MCF 10A (cell line): ENCODE measurements at regions of chr3 and their contacts with region 1.

Region 1: GRCh38 chr3:159732172-159733111 is 256.2 kb upstream of the IL12A start:
- DNase-seq: peak; percentile 73
- H3K4me3 Mint-ChIP-seq: peak overlapping the region; percentile 81
- H3K27ac Mint-ChIP-seq: peak overlapping the region; percentile 50
- H3K4me1 Mint-ChIP-seq: peaks cover 19% of the 10 kb centered on the region
- H3K27me3 Mint-ChIP-seq: no peaks in the 10 kb centered on the region
- CTCF ChIP-seq: no peak

Region 2: GRCh38 chr3:158790901-158791589 is 941.4 kb before region 1 on chr3:
- CTCF ChIA-PET with region 1: no interaction called
- POLR2A ChIA-PET with region 1: no interaction called
- intact Hi-C with region 1: no loop called
- DNase-seq: peak; percentile 71
- H3K4me3 Mint-ChIP-seq: peak overlapping the region; percentile 63
- H3K27ac Mint-ChIP-seq: no peak overlapping the region
- H3K4me1 Mint-ChIP-seq: peaks cover 20% of the 10 kb centered on the region
- H3K27me3 Mint-ChIP-seq: no peaks in the 10 kb centered on the region
- CTCF ChIP-seq: peak; percentile 79

Region 3: DNA sequence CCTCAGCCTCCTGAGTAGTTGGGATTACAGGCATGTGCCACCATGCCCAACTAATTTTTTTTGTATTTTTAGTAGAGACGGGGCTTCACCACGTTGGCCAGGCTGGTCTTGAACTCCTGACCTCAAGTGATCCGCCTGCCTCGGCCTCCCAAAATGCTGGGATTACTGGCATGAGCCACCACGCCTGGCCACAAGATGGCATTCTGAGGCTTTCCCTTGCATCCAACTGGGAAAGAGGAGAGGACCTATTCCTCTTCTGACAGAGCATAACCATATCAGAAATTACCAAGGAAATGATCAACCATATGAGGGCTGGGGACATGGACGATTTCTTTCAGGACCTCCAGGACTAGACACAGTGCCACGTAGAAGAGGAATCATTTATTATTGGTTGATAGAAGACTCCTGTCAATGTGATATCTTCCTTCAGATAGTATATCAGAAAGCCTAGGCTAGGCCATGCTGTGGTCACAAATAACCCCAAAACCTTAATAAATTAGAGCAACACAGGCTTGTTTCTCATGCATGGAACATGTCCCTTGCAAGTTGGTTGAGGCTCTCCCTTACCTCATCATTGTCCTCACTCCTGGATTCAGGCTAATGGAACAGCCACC is 116.1 kb before region 1 on chr3:
- CTCF ChIA-PET with region 1: interaction called, 9 read pairs
- POLR2A ChIA-PET with region 1: interaction called, 3 read pairs
- intact Hi-C with region 1: loop called (anchors 1 kb)
- DNase-seq: peak; percentile 67
- H3K4me3 Mint-ChIP-seq: no peak overlapping the region
- H3K27ac Mint-ChIP-seq: no peak overlapping the region
- H3K4me1 Mint-ChIP-seq: peaks cover 14% of the 10 kb centered on the region
- H3K27me3 Mint-ChIP-seq: no peaks in the 10 kb centered on the region
- CTCF ChIP-seq: peak; percentile 83

Region 4: DNA sequence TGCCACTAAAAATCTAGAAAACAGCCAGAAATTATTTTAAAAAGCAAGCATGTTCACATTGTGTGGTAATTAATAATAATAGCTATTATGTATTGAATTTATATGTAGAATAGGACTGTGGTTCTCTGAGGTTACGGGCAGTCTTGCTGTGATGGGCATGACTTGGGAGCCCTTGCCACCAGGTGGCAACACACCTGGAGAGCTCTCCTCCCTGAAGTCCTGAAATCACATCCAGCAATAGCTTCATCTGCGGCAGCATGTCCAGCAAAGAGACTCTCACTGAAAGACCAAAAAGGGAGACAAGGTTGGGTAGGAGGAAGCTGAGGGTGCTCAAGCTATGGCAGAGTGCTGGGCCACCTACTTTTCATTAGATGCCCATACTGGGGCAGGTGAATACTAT is 49.4 kb after region 1 on chr3:
- CTCF ChIA-PET with region 1: interaction called, 5 read pairs
- POLR2A ChIA-PET with region 1: interaction called, 13 read pairs
- intact Hi-C with region 1: no loop called
- DNase-seq: no peak
- H3K4me3 Mint-ChIP-seq: no peak overlapping the region
- H3K27ac Mint-ChIP-seq: no peak overlapping the region
- H3K4me1 Mint-ChIP-seq: peaks cover 36% of the 10 kb centered on the region
- H3K27me3 Mint-ChIP-seq: no peaks in the 10 kb centered on the region
- CTCF ChIP-seq: no peak

Region 5: GRCh38 chr3:159787191-159787590 is 54.7 kb after region 1 on chr3:
- CTCF ChIA-PET with region 1: interaction called, 5 read pairs
- POLR2A ChIA-PET with region 1: interaction called, 13 read pairs
- intact Hi-C with region 1: no loop called
- DNase-seq: peak; percentile 94
- H3K4me3 Mint-ChIP-seq: peak overlapping the region; percentile 47
- H3K27ac Mint-ChIP-seq: peak overlapping the region; percentile 89
- H3K4me1 Mint-ChIP-seq: peaks cover 55% of the 10 kb centered on the region
- H3K27me3 Mint-ChIP-seq: no peaks in the 10 kb centered on the region
- CTCF ChIP-seq: no peak